ENCODE measurements at regions of chr10 and their contacts with region 1.

Region 1: GRCh38 chr10:104121520-104122224 is at the start of gene SFR1:
- DNase-seq: peak; percentile 99
- H3K4me3 ChIP-seq: peak within 1 kb of the TSS; percentile 74
- H3K27ac ChIP-seq: peak within 1 kb of the TSS; percentile 82
- H3K4me1 ChIP-seq: peaks cover 31% of the 10 kb centered on the region
- CTCF ChIP-seq: peak; percentile 75
- total RNA-seq, gene SFR1: 6.9 and 14.8 TPM in 2 replicates

Region 2: DNA sequence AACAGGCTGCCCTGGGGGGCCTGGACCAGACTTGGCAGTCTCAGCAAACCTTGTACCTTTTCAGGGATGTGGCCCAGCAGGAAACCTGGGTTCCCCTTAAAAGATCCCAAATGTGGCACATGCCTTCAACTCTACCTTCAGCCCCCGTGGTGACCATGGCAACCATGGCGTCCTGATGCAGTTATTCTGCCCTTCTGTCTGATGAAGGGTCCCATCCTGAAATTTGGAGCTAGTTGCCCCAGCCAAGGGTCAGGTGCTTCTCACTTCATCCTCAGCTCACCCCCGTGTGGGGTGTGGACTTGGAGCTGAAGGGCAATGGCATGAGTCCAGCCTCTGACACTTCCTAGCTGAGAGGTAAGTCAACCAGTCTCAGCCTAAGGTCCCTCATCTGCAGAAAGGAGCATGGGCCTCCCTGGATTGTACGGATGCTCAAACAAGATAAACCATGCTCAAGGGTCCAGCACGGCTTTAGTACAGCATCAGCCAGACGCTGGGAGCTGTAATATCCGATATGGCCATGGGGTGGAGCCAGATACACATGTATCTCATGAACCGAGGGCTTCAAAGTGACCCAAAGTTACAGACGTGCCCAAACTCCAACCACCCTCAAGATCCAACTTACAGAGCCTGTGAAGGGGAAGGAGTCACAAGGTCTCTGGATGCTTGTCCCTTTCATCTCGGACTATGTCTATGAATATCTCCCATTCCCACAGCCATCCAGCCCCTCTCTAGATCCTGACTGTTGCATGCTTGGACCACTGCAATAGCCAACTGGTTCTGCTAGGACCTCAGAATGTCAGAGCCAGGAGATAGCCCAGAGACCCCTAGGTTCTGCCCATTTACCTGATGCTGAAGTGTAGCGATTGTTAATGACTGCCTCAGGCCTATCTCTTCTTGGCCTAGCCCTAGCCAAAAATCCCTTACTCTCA is 408.8 kb before region 1 on chr10:
- CTCF ChIA-PET with region 1: no interaction called
- POLR2A ChIA-PET with region 1: no interaction called
- intact Hi-C with region 1: loop called (anchors 5 kb)
- DNase-seq: peak; percentile 81
- H3K4me3 ChIP-seq: no peak overlapping the region
- H3K27ac ChIP-seq: no peak overlapping the region
- H3K4me1 ChIP-seq: no peaks in the 10 kb centered on the region
- CTCF ChIP-seq: peak; percentile 96

Region 3: DNA sequence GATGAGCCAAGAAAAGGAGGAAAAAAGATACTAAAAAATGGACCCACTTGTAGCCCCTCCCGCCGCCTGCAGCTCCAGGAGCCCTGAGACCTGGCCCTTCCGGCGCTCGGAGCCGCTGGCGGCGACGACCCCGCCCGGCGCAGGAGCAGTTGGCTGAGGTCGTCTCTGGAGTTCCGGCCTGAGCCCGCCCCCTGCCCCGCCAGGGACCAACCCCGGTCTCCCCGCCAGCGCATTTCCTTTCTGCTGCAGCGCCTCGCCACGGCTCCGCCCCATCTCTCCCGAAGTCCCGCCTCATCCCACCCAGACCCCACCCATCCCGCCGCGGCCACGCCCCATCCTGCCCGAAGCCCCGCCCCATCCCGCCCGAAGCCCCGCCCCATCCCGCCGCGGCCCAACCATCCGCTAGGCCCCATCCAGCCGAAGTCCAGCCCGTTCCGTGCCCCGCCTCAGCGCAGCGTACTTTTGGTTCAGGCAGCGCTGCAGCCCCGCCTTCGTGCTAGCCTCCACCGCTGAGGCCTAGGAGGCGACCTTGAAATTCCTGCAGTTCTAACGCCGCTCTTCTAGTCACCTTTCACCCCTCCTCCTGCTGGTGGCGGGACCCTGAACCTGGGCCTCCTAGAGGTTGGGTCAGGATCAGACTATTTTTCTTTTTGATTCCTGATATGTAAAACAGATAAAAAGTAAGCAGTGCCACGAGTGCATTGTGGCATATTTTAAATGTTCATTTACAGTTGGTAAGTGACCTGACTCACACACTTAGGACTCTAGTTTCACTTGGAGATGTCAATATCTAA is 203.4 kb before region 1 on chr10 and contains the start of gene STN1:
- CTCF ChIA-PET with region 1: interaction called, 3 read pairs
- POLR2A ChIA-PET with region 1: interaction called, 6 read pairs
- intact Hi-C with region 1: loop called (anchors 1 kb)
- DNase-seq: peak; percentile 97
- H3K4me3 ChIP-seq: peak within 1 kb of the TSS; percentile 75
- H3K27ac ChIP-seq: peak within 1 kb of the TSS; percentile 55
- H3K4me1 ChIP-seq: peaks cover 28% of the 10 kb centered on the region
- CTCF ChIP-seq: peak; percentile 54
- total RNA-seq, gene STN1: 19.5 and 20.9 TPM in 2 replicates

Region 4: GRCh38 chr10:103983367-103983911 is 138.2 kb before region 1 on chr10:
- CTCF ChIA-PET with region 1: no interaction called
- POLR2A ChIA-PET with region 1: interaction called, 10 read pairs
- intact Hi-C with region 1: loop called (anchors 2 kb)
- DNase-seq: peak; percentile 67
- H3K4me3 ChIP-seq: peak overlapping the region; percentile 44
- H3K27ac ChIP-seq: peak overlapping the region; percentile 56
- H3K4me1 ChIP-seq: peaks cover 18% of the 10 kb centered on the region
- CTCF ChIP-seq: no peak

Region 5: DNA sequence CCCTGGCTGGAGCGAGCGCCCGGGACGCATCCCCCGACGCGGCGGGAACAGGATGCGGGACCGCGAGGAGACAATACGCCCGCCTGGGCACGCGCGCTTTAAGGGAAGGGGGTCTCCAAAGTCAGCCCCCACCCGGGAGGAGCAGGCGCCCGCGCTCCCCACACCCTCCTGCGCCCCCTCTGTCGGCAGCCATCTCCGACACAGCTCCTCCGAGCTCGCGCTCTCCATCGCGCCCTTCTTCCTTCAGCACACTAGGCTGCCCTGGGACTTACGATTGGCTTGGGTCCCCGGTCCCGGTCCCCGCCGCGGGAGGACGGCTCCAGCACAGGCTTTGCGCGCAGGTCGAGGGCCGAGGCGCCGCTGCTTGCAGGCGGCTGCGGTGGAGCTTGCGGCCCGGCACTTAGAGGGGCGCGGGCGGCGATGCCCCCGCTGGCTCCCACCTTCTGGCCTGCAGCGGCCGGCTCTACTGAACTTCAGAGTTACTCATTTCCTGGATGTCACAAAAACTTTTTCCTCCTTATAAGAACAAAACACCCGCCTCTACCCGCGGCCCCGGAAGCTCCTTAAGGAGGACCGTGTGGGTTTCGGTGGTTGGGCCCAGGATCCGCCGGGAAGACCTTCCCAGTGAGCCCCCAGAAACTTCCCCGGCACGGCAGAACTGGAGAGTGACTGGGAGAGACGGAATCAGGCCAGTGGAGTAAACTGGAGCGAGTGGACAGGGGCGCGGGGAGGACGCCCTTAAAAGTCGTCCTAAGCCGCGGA is 216.5 kb after region 1 on chr10 and contains the start of gene ITPRIP:
- CTCF ChIA-PET with region 1: no interaction called
- POLR2A ChIA-PET with region 1: no interaction called
- intact Hi-C with region 1: loop called (anchors 5 kb)
- DNase-seq: peak; percentile 87
- H3K4me3 ChIP-seq: peak within 1 kb of the TSS; percentile 79
- H3K27ac ChIP-seq: peak within 1 kb of the TSS; percentile 84
- H3K4me1 ChIP-seq: peaks cover 60% of the 10 kb centered on the region
- CTCF ChIP-seq: peak; percentile 58
- total RNA-seq, gene ITPRIP: 3.3 and 6.0 TPM in 2 replicates